ENCODE measurements at regions of chr11 and their contacts with region 1.

Region 1: DNA sequence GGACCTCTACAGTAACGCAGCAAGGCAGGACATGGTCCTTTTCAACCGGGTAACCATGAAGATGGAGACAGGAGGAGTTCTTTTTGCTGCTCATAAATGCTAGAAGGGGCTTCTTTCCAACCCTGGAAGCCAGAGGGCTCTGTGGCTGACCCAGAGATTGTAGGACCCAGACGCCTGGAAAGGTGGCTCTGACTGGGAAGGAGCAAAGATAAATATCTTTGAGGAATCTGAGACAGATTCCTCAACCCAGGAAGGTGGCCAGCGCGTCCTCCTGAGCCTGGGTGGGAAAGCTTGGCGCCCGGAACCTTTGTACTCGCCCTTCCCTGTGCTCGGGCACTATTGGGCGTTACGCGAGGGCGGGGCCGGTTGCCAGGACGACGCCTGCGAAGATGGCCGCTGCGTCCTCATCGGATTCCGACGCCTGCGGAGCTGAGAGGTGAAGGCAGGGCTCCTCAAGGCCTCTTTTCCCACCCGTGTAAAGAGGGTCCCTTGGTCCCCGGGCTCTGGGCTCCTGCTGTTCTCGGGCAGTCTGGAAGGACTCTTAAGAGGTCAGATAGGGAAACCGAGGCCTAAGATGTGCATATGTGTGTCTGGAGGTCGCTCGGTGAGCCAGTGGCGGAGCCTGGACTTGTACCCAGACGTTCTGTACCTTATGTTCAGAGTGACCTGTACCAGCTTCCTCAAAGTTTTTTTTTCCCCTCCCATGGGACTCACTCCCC is at the start of gene BBS1:
- DNase-seq: peak; percentile 30 to 89
- H3K4me3 ChIP-seq: peak within 1 kb of the TSS; percentile 67 to 87
- H3K27ac ChIP-seq: peak within 1 kb of the TSS; percentile 39 to 63
- H3K4me1 ChIP-seq: peaks cover 0 to 12% of the 10 kb centered on the region in 2 donors
- H3K27me3 ChIP-seq: no peaks in the 10 kb centered on the region
- CTCF ChIP-seq: no peak
- total RNA-seq, gene BBS1: 39.6 TPM

Region 2: GRCh38 chr11:66480117-66480938 is 30.1 kb before region 1 on chr11 and contains the start of gene DPP3:
- intact Hi-C with region 1: loop called (anchors 1 kb)
- DNase-seq: peak; percentile 88 to 98
- H3K4me3 ChIP-seq: peak within 1 kb of the TSS; percentile 67 to 75
- H3K27ac ChIP-seq: peak within 1 kb of the TSS; percentile 84 to 92
- H3K4me1 ChIP-seq: peaks cover 0 to 13% of the 10 kb centered on the region in 2 donors
- H3K27me3 ChIP-seq: no peaks in the 10 kb centered on the region
- CTCF ChIP-seq: no peak
- total RNA-seq, gene DPP3: 14.8 TPM